ENCODE measurements at regions of chr14 and their contacts with region 1.

Region 1: DNA sequence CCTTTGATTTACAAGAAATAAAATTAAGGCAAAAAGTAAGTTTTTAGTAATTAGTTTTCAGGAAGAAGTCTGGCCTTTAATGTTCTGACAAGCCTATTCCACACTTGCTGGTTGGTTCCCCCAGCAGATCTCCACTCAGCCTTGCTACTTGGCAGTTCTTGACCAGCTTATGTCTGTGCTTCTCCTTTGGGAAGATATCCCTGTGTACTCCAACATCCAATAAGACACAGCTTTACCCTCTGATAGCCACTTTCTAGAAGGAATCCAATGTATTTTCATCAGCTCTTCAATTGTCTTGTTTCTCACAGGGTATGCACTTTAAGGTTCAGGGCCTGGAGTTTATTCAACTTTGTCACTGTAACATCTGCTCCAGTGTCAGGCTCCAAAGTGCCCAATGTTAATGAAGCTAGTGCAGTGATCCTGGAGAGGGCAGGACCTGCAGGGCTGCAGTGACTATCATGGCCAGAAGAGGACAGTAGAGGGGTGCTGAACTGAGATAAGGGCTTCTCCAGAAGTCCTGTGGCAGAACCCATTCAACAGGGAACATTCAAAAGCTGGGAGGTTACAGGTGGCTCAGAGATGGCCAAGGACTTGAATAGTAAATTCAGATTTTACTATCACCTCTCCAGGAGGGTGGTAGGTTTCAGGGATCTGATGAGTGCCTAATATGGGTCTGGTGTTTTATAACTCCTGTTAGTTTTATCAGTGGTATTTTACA is 22.9 kb downstream of the JKAMP start:
- DNase-seq: no peak
- ATAC-seq: peak; percentile 94
- H3K4me3 ChIP-seq: no peak overlapping the region
- H3K27ac ChIP-seq: no peak overlapping the region
- H3K4me1 ChIP-seq: no peaks in the 10 kb centered on the region
- H3K27me3 ChIP-seq: no peaks in the 10 kb centered on the region
- CTCF ChIP-seq: peak; percentile 86 to 95 (median 90)
- EP300 ChIP-seq: no peak
- POLR2A ChIP-seq: no peak
- RAD21 ChIP-seq: peak; percentile 68

Region 2: DNA sequence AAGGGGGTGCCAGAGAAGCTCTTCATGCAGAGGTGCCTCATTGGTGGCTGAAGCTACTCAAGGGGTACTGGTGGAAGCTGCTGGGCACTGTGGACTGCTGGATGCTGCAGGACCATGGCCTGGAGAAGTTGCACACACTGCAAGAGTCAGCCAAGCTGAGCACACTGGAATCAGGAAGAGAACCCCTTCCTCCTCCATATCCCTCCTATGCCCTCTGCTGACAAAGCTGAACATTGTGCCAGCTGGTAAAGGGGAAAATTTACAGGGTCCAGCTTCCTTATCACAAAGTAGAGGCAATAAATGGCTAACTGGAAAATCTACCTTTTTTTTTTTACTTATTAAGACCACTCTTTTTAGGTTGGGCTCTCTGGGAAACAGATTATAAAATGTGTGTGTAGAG is 62.9 kb after region 1 on chr14:
- CTCF ChIA-PET with region 1: interaction called, 147 read pairs
- POLR2A ChIA-PET with region 1: no interaction called
- RAD21 ChIA-PET with region 1: interaction called, 9 read pairs
- SMC1A ChIA-PET with region 1: interaction called, 8 read pairs
- in situ Hi-C with region 1: no loop called
- intact Hi-C with region 1: no loop called
- DNase-seq: no peak
- ATAC-seq: no peak
- H3K4me3 ChIP-seq: no peak overlapping the region
- H3K27ac ChIP-seq: no peak overlapping the region
- H3K4me1 ChIP-seq: no peaks in the 10 kb centered on the region
- H3K27me3 ChIP-seq: no peaks in the 10 kb centered on the region; a peak in 1 of 4 replicates
- CTCF ChIP-seq: peak in 1 of 3 experiments; percentile 11; a peak in 1 of 6 replicates
- EP300 ChIP-seq: no peak
- POLR2A ChIP-seq: no peak
- RAD21 ChIP-seq: 0 out of 2 replicates have a peak, but pooled peaks have one; percentile 3

Region 3: DNA sequence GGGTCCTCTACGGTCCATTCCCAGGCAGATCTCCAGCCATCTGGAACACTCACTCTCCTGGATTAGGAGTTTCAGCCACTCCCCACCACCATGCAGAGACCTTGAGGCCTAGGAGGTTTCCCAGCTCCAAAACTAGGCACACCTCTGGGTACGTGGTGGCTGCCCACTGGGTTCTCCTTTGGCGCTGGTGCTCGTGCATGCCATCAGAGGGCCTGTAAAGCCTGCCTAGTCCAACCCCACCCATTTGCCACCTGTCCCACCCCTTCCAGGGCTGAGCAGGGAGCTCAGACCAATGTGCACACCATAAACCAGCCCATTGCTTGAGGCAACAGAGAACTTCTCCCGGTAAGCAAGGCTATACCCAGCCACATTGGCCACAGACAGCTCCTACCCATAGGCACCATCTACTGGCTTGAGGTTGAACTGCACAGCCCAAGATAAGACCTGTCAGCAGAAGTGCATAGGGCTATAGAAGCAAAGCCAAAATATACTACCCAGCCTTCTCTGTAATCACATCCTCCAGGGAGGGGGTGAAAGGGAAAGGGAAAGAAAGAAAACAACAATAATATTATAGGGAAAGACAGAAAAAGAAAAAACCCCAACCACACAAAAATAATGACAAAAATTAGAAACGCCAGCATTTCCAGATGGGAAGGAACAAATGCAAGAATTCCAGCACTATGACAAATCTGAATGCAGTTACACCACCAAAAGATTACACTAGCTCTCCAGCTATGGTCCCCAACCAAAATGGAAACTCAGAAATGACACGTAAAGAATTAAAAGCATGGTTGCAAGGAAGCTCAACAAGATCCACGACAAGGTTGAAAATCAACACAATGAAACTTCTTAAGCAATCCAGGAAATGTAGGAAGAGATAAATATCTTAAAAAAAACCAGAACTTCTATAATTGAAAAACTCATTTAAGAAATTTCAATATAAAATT is 181.3 kb after region 1 on chr14:
- CTCF ChIA-PET with region 1: no interaction called
- POLR2A ChIA-PET with region 1: no interaction called
- RAD21 ChIA-PET with region 1: no interaction called
- SMC1A ChIA-PET with region 1: no interaction called
- in situ Hi-C with region 1: no loop called
- intact Hi-C with region 1: loop called (anchors 5 kb)
- DNase-seq: no peak
- ATAC-seq: peak; percentile 99
- H3K4me3 ChIP-seq: no peak overlapping the region
- H3K27ac ChIP-seq: no peak overlapping the region
- H3K4me1 ChIP-seq: no peaks in the 10 kb centered on the region
- H3K27me3 ChIP-seq: no peaks in the 10 kb centered on the region
- CTCF ChIP-seq: peak; percentile 64 to 84 (median 81)
- EP300 ChIP-seq: no peak
- POLR2A ChIP-seq: no peak
- RAD21 ChIP-seq: peak; percentile 60